Heart left ventricle (tissue), 16 donors: ENCODE measurements at regions of chr1 and their contacts with region 1.

Region 1: DNA sequence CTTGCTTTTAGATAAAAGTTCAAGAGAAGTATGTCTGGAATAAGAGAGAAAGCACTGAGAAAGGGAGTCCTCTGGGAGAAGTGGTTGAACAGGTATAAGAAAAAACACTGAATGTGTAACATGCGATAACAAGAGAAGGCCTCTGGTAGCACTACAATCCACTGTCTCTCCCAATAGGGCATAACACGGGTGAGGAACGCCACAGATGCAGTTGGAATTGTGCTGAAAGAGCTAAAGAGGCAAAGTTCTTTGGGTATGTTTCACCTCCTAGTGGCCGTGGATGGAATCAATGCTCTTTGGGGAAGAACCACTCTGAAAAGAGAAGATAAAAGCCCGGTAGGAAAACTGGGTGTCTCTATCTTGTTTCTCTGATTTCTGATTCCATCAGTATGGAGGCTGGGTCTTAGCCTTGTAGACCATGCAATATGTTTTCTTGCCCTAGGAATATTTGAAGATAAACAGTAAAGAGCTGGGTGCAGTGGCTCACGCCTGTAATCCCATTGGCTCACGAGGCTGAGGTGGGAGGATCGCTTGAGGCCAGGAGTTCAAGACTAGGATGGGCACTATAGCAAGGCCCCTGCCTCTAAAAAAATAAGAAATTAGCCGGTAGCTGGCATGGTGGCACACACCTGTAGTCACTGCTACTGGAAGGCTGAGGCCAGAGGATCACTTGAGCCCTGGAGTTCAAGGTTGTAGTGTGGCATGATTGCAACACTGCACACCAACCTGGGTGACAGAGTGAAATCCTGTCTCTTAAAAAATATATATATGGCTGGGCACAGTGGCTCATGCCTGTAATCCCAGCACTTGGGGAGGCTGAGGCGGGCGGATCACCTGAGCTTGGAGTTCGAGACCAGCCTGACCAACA is 40.4 kb downstream of the DAP3 start:
- DNase-seq: peak in 3 of 5 donors; percentile 23 to 38 (median 33)
- ATAC-seq: peak in 3 of 4 donors; percentile 45 to 58 (median 56)
- H3K4me3 ChIP-seq: no peak overlapping the region
- H3K27ac ChIP-seq: no peak overlapping the region
- H3K4me1 ChIP-seq: no peaks in the 10 kb centered on the region
- H3K27me3 ChIP-seq: no peaks in the 10 kb centered on the region
- CTCF ChIP-seq: peak in 11 of 12 donors; percentile 31 to 61 (median 51)
- POLR2A ChIP-seq: no peak

Region 2: GRCh38 chr1:155678027-155678426 is 51.2 kb before region 1 on chr1:
- intact Hi-C with region 1: loop called in 2 of 10 experiments (anchors 10 kb)
- DNase-seq: no peak
- ATAC-seq: no peak
- H3K4me3 ChIP-seq: no peak overlapping the region
- H3K27ac ChIP-seq: no peak overlapping the region
- H3K4me1 ChIP-seq: peaks cover 0 to 27% (median 13%) of the 10 kb centered on the region in 12 donors
- H3K27me3 ChIP-seq: no peaks in the 10 kb centered on the region
- CTCF ChIP-seq: no peak
- POLR2A ChIP-seq: no peak

Region 3: GRCh38 chr1:155688324-155689080 is 40.8 kb before region 1 on chr1 and contains the start of gene YY1AP1:
- intact Hi-C with region 1: loop called in 2 of 10 experiments (anchors 5 to 10 kb)
- DNase-seq: peak; percentile 95 to 96 (median 95)
- ATAC-seq: peak; percentile 93 to 97 (median 96)
- H3K4me3 ChIP-seq: peak within 1 kb of the TSS; percentile 70 to 99 (median 93)
- H3K27ac ChIP-seq: peak within 1 kb of the TSS; percentile 91 to 99 (median 97)
- H3K4me1 ChIP-seq: peaks cover 0 to 74% (median 41%) of the 10 kb centered on the region in 12 donors
- H3K27me3 ChIP-seq: no peaks in the 10 kb centered on the region
- CTCF ChIP-seq: peak in 5 of 12 donors; percentile 7 to 28 (median 23)
- POLR2A ChIP-seq: peak in 1 of 2 donors; percentile 52
- total RNA-seq, gene YY1AP1: 61.1 to 124 (median 66.3) TPM